CD14-positive monocyte (primary cell): ENCODE measurements at regions of chr11 and their contacts with region 1.

Region 1: GRCh38 chr11:61429691-61430582 is at the starts of genes CPSF7 and SDHAF2:
- DNase-seq: peak; percentile 95 to 98 (median 96)
- H3K4me3 ChIP-seq: peak within 1 kb of the TSS; percentile 83 to 96 (median 87)
- H3K4me3 Mint-ChIP-seq: peak within 1 kb of the TSS; percentile 94 to 98
- H3K27ac ChIP-seq: peak within 1 kb of the TSS; percentile 96 to 98
- H3K27ac Mint-ChIP-seq: peak within 1 kb of the TSS; percentile 98 to 100 (median 100)
- H3K4me1 ChIP-seq: peaks cover 17 to 37% of the 10 kb centered on the region in 2 donors
- H3K4me1 Mint-ChIP-seq: peaks cover 36% of the 10 kb centered on the region
- H3K27me3 ChIP-seq: no peaks in the 10 kb centered on the region
- H3K27me3 Mint-ChIP-seq: no peaks in the 10 kb centered on the region
- CTCF ChIP-seq: no peak
- polyA plus RNA-seq, gene CPSF7: 12.5 to 67.5 (median 20.1) TPM
- polyA plus RNA-seq, gene SDHAF2: 45.5 to 70.2 (median 64.8) TPM

Region 2: GRCh38 chr11:61417670-61418069 is 12.3 kb before region 1 on chr11:
- intact Hi-C with region 1: loop called in 1 of 2 experiments (anchors 2 kb)
- DNase-seq: peak; percentile 86 to 96 (median 96)
- H3K4me3 ChIP-seq: no peak overlapping the region
- H3K4me3 Mint-ChIP-seq: peak overlapping the region in 1 of 2 donors; percentile 75
- H3K27ac ChIP-seq: peak overlapping the region; percentile 66 to 93
- H3K27ac Mint-ChIP-seq: peak overlapping the region; percentile 95 to 99 (median 97)
- H3K4me1 ChIP-seq: peaks cover 20 to 21% of the 10 kb centered on the region in 2 donors
- H3K4me1 Mint-ChIP-seq: peaks cover 23% of the 10 kb centered on the region
- H3K27me3 ChIP-seq: no peaks in the 10 kb centered on the region
- H3K27me3 Mint-ChIP-seq: peaks cover 0 to 1% (median 0%) of the 10 kb centered on the region in 3 donors
- CTCF ChIP-seq: no peak